Sciatic nerve (tissue), 2 donors: ENCODE measurements at regions of chr22 and their contacts with region 1.

Region 1: DNA sequence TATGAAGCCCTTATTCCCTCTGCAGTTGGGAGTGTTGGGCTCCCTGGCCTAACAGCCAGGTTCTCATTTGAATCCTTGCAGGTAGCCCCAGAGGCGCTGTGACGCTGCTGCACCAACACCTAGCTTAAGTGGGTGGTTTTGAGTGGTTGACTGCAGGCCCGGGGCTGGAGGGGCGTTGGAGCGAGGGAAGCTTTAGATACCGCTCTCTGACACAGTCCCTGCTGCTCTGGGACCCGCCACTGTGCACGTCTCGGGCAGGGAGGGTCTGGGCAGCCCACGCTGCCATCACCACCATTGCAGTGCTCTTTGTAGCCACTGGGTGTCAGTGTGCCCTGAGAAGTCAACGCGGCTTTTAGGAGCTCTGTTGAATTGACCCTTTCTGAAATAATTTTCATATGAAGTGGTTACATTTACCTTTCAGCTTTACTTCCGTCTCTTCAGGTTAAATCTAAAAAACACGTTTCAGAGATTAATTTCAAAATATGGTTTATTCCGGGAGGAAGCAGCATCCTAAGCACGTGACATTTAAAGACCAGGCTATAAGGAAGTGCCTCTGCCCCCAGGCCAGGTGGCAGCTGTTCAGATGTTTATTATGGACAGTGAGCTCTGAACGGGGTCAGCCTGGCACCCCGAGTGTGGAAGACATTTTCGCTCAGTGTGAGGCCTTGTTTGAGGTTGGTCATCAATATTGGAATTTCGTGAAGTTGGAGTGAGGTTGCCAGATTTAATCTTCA is 30.9 kb upstream of the PARVB start:
- DNase-seq: peak; percentile 76
- ATAC-seq: peak; percentile 83

Region 2: GRCh38 chr22:43945632-43946383 is 47.4 kb before region 1 on chr22:
- intact Hi-C with region 1: no loop called
- DNase-seq: peak; percentile 74
- ATAC-seq: peak; percentile 72

Region 3: DNA sequence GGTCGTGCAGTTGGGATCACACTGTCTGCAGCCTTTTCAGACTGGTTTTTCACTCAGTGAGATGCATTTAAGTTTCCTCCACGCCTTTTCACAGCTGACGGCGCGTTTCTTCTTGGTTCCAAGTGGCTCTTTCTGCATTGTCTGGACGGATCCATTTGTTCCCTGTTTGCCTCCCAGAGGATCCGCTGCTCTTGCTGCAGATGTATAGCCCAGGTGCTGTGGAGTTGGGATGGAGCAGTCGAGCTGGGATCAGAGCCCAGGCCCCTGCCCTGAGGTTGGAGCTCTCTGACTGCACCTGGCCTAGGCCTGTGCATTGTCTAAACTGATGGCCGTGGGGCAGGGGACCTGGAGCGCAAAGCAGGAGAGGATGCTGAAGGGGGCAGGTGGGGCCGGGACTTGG is 82.5 kb after region 1 on chr22:
- intact Hi-C with region 1: loop called (anchors 5 kb)
- DNase-seq: no peak
- ATAC-seq: no peak

Region 4: GRCh38 chr22:44192098-44192810 is 199.1 kb after region 1 on chr22:
- intact Hi-C with region 1: no loop called
- DNase-seq: peak; percentile 59
- ATAC-seq: peak; percentile 41

Region 5: DNA sequence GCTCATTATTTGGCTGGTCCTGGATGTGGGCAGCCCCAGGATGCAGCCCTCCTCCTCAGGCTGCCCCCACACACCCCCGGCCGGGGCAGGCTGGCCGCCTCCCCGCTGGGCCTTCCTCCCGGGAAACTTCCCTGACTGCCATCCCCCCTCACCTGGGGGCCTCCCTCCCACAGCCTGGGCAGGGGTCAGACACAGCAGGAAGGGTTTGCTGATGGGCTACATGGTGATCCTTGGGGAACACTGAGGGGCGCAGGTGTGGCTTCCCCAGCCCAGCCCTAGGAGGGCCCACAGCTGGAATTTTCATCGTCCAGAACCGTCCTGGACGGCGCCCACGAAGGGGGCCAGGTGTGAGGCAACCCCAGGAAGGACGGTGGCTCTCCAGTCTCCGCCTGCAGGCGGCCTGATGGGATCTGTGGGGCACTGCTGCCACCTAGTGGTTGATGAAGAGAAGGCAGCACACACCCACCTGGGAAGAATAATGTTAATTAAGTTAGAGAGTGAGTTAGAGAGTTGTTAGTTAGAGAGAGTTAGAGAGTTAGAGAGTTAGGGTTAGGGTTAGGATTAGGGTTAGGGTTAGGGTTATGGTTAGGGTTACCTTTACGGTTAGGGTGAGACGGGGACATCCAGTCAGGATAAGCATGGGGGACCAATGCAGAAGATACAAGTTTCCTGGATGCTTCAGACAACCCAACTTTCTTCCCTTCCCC is 632.9 kb after region 1 on chr22:
- intact Hi-C with region 1: loop called (anchors 5 kb)
- DNase-seq: peak; percentile 84
- ATAC-seq: peak; percentile 81